Activated T-helper 1 cell treated with anti-CD3 and anti-CD28 coated beads, Interleukin-12 subunit alpha, Interleukin-12 subunit beta, Interleukin-2, Interleukin-4 antibody, amounts not matched to agents 30 ng/mL and 10 ng/mL and 1 ng/mL, durations not matched to agents 14 hours and 24 hours and 36 hours (primary cell): ENCODE measurements at regions of chr6 and their contacts with region 1.

Region 1: GRCh38 chr6:41920921-41921711 is at the starts of genes BYSL and MED20:
- DNase-seq: peak; percentile 89
- H3K4me3 Mint-ChIP-seq: peak within 1 kb of the TSS; percentile 98
- H3K27ac Mint-ChIP-seq: peak within 1 kb of the TSS; percentile 98
- H3K4me1 Mint-ChIP-seq: peaks cover 53% of the 10 kb centered on the region
- H3K27me3 Mint-ChIP-seq: no peaks in the 10 kb centered on the region
- total RNA-seq, gene BYSL: 82.9 and 88.5 TPM in 2 replicates
- total RNA-seq, gene MED20: 19.0 and 23.8 TPM in 2 replicates

Region 2: GRCh38 chr6:41801380-41801779 is 119.7 kb before region 1 on chr6:
- intact Hi-C with region 1: no loop called
- DNase-seq: no peak
- H3K4me3 Mint-ChIP-seq: no peak overlapping the region
- H3K27ac Mint-ChIP-seq: no peak overlapping the region
- H3K4me1 Mint-ChIP-seq: no peaks in the 10 kb centered on the region
- H3K27me3 Mint-ChIP-seq: no peaks in the 10 kb centered on the region

Region 3: DNA sequence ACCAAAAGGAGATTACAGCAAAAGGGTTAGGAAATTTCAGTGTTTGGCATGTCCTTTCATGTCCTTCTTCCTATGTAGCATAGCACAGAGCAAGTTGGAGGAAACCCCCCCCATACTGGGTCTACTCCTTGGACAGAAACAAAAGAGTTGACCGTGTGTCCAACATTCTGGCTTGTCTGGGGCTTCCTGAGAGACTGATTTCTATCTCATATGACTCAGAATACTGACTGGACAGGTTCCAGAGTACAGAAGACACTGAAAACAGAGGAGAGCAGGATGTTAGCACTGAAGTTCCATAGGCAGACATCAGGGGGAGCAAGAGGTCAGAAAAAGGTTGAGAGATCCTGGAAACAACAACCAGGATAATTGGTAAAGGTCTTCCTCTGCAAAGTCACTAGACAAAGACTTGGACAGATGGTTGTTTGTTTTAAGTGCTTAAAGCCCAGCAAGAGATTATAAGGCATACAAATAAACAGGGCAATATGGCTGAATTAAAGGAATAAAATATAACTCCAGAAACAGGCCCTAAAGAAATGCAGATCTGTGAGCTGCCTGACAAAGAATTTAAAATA is 74.4 kb before region 1 on chr6:
- intact Hi-C with region 1: loop called (anchors 1 kb)
- DNase-seq: peak; percentile 31
- H3K4me3 Mint-ChIP-seq: no peak overlapping the region
- H3K27ac Mint-ChIP-seq: no peak overlapping the region
- H3K4me1 Mint-ChIP-seq: peaks cover 11% of the 10 kb centered on the region
- H3K27me3 Mint-ChIP-seq: no peaks in the 10 kb centered on the region

Region 4: DNA sequence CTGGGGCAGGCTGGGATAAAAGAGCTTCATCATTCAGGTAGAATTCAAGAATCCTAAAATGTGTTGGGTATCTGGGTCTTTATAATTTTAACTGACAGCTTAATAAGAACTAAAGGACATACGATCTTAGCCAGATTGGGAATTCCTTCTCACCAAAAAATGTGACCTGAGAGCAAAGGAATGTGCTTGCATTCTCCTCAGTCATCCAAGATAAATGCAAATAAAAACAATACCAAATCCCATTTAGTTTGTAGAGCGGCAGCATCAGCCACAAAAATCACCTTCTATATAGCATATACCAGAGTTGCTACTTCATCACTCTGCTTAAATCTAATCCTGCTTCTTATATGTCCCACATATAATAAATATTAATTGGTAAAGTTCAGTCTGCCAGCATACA is 42.9 kb before region 1 on chr6:
- intact Hi-C with region 1: no loop called
- DNase-seq: no peak
- H3K4me3 Mint-ChIP-seq: no peak overlapping the region
- H3K27ac Mint-ChIP-seq: no peak overlapping the region
- H3K4me1 Mint-ChIP-seq: no peaks in the 10 kb centered on the region
- H3K27me3 Mint-ChIP-seq: no peaks in the 10 kb centered on the region

Region 5: DNA sequence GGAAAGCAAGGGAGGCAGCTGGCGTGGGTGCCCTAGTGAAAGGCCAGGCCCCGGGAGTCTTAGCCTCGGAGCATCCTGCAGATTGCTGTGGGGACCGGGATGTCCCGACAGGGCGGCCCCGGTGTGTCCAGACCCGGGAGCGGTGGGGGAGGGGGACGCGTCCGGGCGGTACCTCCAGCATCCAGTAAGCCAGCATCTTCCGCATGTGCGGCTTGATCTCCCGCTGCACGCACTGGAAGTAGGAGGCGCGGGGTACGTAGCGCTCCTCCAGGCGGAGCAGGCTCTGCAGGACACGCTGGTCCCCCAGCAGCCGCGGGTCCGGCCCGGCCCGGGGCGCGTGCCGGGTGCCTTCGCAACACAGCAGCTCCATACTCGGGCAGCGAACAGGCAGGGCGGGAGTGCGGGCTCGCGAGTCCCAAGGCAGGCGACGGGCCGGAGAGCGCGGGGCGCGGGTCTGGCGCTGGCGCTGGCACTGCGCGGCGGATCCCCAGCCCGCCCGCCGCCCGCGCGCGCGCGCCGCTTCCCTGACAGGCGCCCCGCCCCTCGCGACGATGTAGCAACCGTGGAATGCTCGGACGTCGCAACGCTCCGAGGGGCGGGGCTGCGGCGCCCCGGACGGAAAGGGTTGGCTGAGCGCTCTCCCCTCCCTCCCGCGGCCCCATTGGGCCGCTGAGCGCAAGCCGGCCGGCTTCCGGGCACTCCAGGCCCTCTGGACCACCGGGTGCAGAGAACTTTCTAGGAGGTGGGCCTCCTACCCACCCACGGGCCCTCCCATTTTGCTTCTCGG is 20.4 kb after region 1 on chr6 and contains the start of gene CCND3:
- intact Hi-C with region 1: loop called (anchors 1 kb)
- DNase-seq: peak; percentile 89
- H3K4me3 Mint-ChIP-seq: peak within 1 kb of the TSS; percentile 99
- H3K27ac Mint-ChIP-seq: peak within 1 kb of the TSS; percentile 94
- H3K4me1 Mint-ChIP-seq: peaks cover 43% of the 10 kb centered on the region
- H3K27me3 Mint-ChIP-seq: no peaks in the 10 kb centered on the region
- total RNA-seq, gene CCND3: 351 and 356 TPM in 2 replicates

Region 6: DNA sequence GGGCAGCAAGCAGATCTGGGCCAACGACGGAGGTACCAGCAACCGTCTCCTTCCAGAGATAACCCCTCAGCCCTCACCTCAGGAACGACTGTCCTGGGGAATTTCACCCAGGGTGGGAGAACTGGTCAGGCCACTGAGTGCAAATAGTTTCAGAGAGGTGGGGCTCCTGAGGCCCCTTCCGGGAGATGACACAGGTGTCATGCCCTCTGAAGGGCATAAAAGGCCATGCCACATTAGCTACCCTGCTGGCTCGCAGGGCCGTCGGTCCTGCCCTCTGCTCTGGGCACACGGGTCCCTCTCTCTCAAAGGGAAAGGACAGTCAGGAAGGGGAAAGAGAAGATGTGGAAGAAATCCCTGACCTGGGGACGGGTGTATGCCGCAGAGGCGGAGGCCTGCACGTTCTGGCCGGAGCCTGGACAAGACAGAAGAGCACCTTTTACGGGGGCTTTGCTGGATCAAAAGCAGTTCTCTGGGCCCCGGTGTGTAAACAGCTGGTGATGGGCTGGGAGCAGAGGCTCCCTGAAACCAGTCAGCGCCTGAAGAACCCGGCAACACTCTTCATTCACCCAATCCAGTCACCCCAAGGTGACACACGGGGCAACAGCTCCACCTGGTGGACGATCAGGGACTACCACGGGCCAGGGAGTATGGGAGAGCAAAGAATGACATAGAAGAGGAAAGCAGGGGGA is 122.8 kb after region 1 on chr6:
- intact Hi-C with region 1: loop called (anchors 1 kb)
- DNase-seq: peak; percentile 87
- H3K4me3 Mint-ChIP-seq: peak overlapping the region; percentile 70
- H3K27ac Mint-ChIP-seq: peak overlapping the region; percentile 83
- H3K4me1 Mint-ChIP-seq: peaks cover 82% of the 10 kb centered on the region
- H3K27me3 Mint-ChIP-seq: no peaks in the 10 kb centered on the region

Region 7: GRCh38 chr6:42217519-42218367 is 296.6 kb after region 1 on chr6 and contains the start of gene MRPS10:
- intact Hi-C with region 1: loop called (anchors 1 kb)
- DNase-seq: peak; percentile 89
- H3K4me3 Mint-ChIP-seq: peak within 1 kb of the TSS; percentile 96
- H3K27ac Mint-ChIP-seq: peak within 1 kb of the TSS; percentile 89
- H3K4me1 Mint-ChIP-seq: peaks cover 20% of the 10 kb centered on the region
- H3K27me3 Mint-ChIP-seq: no peaks in the 10 kb centered on the region
- total RNA-seq, gene MRPS10: 48.8 and 49.7 TPM in 2 replicates

Region 8: GRCh38 chr6:42498473-42499128 is 577.5 kb after region 1 on chr6:
- intact Hi-C with region 1: no loop called
- DNase-seq: no peak
- H3K4me3 Mint-ChIP-seq: no peak overlapping the region
- H3K27ac Mint-ChIP-seq: no peak overlapping the region
- H3K4me1 Mint-ChIP-seq: peaks cover 7% of the 10 kb centered on the region
- H3K27me3 Mint-ChIP-seq: peaks cover 21% of the 10 kb centered on the region